WTC11 (cell line): ENCODE measurements at regions of chr7 and their contacts with region 1.

Region 1: GRCh38 chr7:73623798-73624668 is at the start of gene MLXIPL:
- DNase-seq: peak; percentile 96
- ATAC-seq: peak; percentile 89
- H3K4me3 Mint-ChIP-seq: peak within 1 kb of the TSS; percentile 83
- H3K27ac Mint-ChIP-seq: no peak within 1 kb of the TSS; the same call in 1 of the 2 replicates
- H3K4me1 Mint-ChIP-seq: peaks cover 7% of the 10 kb centered on the region
- H3K27me3 Mint-ChIP-seq: peaks cover 37% of the 10 kb centered on the region
- CTCF ChIP-seq: no peak
- total RNA-seq, gene MLXIPL: 20.4 to 26.6 TPM (median 23.8 TPM) in 3 replicates

Region 2: DNA sequence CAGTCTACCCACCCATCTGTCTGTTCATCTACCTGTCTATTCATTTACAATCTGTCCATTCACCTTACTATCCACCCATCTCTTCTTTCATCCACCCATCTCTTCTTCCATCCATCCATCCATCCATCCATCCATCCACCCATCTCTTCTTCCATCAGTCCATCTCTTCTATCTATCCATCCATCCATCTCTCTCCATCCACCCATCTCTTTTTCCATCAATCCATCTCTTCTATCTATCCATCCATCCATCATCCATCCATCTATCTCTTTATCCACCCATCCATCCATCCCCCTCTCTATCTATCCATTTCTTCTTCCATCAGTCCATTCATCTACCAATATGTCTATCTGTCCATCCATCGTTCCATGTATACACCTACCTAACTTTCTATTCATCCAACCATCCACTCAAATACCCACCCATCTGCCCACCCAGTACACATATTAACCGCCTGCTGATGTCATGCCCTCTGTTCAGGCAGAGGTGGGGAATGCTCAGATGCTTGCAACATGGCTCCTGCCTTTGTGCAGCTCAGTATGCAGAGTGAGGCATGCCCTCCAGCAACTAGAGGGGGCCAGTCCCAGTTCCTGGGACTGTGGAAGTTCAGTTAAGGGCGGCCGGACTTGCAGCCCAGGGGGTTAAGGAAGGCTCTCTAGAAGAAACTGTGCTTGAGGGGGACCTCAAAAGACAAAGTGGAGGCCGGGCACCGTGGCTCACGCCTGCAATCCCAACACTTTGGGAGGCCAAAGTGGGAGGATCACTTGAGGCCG is 11.6 kb after region 1 on chr7:
- CTCF ChIA-PET with region 1: interaction called, 12 read pairs
- POLR2A ChIA-PET with region 1: interaction called, 3 read pairs
- DNase-seq: no peak
- ATAC-seq: no peak
- H3K4me3 Mint-ChIP-seq: no peak overlapping the region
- H3K27ac Mint-ChIP-seq: no peak overlapping the region
- H3K4me1 Mint-ChIP-seq: peaks cover 7% of the 10 kb centered on the region
- H3K27me3 Mint-ChIP-seq: no peaks in the 10 kb centered on the region
- CTCF ChIP-seq: no peak

Region 3: GRCh38 chr7:73667344-73668102 is 43.5 kb after region 1 on chr7 and contains the start of gene VPS37D:
- CTCF ChIA-PET with region 1: interaction called, 24 read pairs
- POLR2A ChIA-PET with region 1: interaction called, 7 read pairs
- DNase-seq: peak; percentile 96
- ATAC-seq: peak; percentile 87
- H3K4me3 Mint-ChIP-seq: peak within 1 kb of the TSS; percentile 75
- H3K27ac Mint-ChIP-seq: no peak within 1 kb of the TSS; the same call in 1 of the 2 replicates
- H3K4me1 Mint-ChIP-seq: peaks cover 40% of the 10 kb centered on the region
- H3K27me3 Mint-ChIP-seq: peaks cover 30% of the 10 kb centered on the region
- CTCF ChIP-seq: peak; percentile 86
- total RNA-seq, gene VPS37D: 5.7 to 7.5 TPM (median 5.8 TPM) in 3 replicates